ENCODE measurements at regions of chr11 and their contacts with region 1.

Region 1: DNA sequence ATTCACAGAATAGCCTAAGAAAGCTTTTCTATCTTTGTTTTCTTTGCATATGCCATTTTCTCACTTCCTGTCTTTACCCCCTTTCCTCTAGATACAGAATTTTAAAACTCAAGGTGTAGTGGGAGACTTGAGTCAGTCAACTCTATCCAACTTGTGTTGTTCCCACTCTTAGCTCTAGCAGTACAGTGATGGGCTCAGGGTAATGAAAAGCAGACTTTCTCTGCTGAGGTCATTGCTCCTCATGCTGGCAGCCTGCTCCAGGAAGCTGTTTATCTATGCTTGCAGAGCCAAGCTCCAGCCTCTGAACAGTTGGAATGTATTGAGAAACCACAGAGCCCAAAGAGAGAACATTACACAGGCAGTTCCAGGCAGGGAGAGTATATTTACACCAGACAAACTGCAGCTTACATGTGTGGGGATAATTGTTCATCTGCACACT is 68.1 kb downstream of the CSTPP1 start:
- DNase-seq: peak; percentile 83

Region 2: DNA sequence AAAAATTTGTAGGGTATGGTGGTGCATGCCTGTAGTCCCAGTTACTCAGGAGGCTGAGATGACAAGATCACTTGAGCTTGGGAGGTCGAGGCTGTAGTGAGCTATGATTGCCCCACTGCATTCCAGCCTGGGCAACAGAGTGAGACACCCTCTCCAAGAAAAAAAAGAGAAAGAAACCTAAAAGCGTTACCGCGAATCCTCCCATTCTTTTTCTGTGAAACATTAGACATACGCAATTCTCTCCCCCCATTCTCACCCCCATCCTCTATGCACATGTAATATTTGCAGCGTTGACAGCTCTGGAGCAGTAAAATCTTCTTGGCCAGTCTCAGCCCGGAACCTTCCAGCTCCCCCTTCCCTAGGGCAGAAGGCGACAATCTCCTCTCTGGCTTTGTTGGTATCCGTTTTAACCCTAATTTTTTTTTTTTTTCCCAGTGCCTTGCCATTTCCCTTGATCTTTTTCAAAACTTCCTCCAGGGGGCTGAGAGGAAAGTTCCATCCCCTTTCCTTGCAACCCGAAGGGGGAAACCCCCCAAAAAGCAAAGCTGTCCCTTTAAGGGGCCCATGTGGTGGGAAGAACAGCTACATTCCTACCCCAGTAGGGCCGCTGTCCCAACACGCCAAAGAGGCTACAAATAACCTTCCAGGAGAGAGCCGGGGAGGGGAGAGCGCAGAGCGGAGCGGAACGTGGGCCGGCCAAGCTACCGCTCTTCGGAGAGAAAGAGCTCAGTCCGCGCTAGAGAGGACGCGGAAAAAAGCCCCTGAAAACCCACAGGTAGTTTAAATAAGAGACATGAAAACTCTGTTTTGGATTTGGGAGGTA is 88.1 kb before region 1 on chr11:
- intact Hi-C with region 1: loop called (anchors 5 kb)
- DNase-seq: no peak

Region 3: GRCh38 chr11:46936138-46937110 is 68.2 kb before region 1 on chr11 and contains the start of gene CSTPP1:
- intact Hi-C with region 1: no loop called
- DNase-seq: peak; percentile 92
- total RNA-seq, gene CSTPP1: 13.2 TPM

Region 4: DNA sequence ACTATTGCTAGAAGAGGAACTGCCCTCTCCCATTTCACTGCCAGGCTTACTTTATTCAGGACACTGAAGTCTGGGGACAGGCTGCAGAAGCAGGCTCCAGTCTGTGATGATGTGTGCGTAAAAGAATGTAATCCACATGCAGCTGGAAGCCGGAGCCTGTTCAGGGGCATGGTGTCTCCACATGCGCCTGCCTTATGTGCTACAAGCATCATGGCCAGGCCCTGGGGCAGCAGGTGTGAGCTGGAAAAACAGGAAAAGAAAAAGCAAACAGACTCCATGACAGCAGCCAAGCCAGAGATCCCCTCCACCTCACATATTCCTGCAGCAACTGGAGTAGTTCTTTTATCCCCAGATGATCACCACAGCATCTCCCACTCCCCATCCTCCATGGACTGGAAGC is 138.7 kb after region 1 on chr11:
- intact Hi-C with region 1: loop called (anchors 10 kb)
- DNase-seq: no peak

Measured in cardiac septum (tissue), 1 donor.